PC-9 (cell line): ENCODE measurements at regions of chr13 and their contacts with region 1.

Region 1: GRCh38 chr13:44108331-44108858 is 228.7 kb downstream of the LACC1 start:
- DNase-seq: peak; percentile 62 to 93
- H3K4me3 ChIP-seq: 0 out of 2 replicates have a peak overlapping the region, but pooled peaks have one; percentile 6
- H3K27ac ChIP-seq: peak overlapping the region; percentile 76
- H3K4me1 ChIP-seq: peaks cover 50% of the 10 kb centered on the region
- H3K27me3 ChIP-seq: no peaks in the 10 kb centered on the region
- CTCF ChIP-seq: no peak

Region 2: GRCh38 chr13:44022163-44022562 is 86.2 kb before region 1 on chr13:
- CTCF ChIA-PET with region 1: no interaction called
- POLR2A ChIA-PET with region 1: no interaction called
- intact Hi-C with region 1: loop called (anchors 1 kb)
- DNase-seq: peak; percentile 52 to 96
- H3K4me3 ChIP-seq: peak overlapping the region; percentile 22; the same call in 1 of the 2 replicates
- H3K27ac ChIP-seq: peak overlapping the region; percentile 88
- H3K4me1 ChIP-seq: peaks cover 25% of the 10 kb centered on the region
- H3K27me3 ChIP-seq: no peaks in the 10 kb centered on the region
- CTCF ChIP-seq: no peak